GM12878 (cell line): ENCODE measurements at regions of chr6 and their contacts with region 1.

Region 1: DNA sequence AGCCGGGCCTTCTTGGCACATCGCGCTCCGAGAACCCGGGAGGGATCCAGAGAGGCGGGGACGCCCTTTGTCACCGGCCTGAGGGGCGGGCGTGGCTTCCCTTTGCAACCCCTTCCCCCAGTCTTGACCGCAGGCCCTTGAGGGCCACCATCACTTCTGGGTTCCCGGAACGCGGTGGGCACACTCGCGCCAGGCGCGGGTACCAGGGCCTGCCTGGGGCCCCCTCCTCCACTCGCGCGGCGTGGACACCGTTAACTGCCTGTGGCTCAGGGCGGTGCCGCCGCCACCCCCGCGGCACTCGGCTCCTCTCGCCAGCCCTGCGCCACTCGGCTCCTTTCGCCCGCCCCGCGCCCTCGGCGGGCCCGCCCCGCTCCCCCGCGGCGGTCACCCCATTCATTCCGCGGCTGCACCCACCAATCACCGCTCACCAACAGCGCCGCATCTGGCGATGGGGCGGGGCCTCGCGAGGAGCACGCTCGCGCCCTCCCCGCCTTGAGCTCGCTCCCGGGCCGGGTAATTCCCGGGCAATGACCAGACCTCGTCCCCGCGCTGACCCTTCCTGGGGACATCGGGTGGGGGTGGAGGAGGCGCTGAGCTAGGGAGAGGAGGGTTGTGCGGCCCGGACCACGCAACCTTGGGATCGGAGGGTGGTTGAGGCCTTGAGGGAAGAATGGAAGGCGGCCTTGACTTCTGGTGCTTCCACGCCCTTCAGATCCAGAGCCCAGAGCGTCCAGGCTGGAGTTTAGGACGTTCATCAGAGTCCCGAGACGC is 10.5 kb upstream of the ELOVL5 start:
- DNase-seq: peak; percentile 78
- ATAC-seq: peak; percentile 95
- H3K4me3 ChIP-seq: peak overlapping the region; percentile 76
- H3K27ac ChIP-seq: peak overlapping the region; percentile 86
- H3K4me1 ChIP-seq: peaks cover 17% of the 10 kb centered on the region
- H3K27me3 ChIP-seq: no peaks in the 10 kb centered on the region
- CTCF ChIP-seq: no peak
- EP300 ChIP-seq: 0 out of 4 replicates have a peak, but pooled peaks of 1 of the 2 experiments have one; percentile 8
- POLR2A ChIP-seq: peak; percentile 94
- RAD21 ChIP-seq: no peak

Region 2: DNA sequence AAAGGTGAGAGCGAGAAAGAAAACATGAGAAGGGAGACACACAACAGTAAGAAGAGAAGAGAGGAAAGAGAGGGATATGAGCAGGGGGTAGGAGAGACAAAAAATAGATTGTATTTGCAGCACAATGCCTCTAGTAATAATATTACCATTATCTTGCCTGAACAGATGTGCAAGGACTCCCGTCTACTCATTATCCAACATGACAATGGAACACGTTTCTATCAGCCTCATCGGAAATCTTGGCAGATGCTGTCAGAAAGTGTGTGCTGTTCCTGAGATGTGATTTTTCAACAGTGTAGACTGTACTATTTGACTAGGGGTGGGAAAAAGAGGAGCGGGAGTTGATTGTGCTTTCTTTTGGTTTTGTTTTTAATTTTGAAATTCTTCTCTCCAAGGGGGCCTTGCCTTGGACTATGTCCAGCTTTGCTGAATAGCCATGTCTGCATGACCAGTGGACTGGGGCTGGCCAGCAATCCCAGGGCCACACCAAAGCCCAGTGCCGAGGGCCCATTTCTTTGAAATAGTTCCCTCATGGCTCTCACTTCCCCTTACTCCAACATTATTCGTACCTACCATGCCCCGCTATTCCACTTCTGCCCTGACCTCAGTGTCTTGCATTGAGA is 771.1 kb before region 1 on chr6:
- CTCF ChIA-PET with region 1: no interaction called
- POLR2A ChIA-PET with region 1: no interaction called
- RAD21 ChIA-PET with region 1: no interaction called
- SMC1A ChIA-PET with region 1: no interaction called
- in situ Hi-C with region 1: no loop called
- intact Hi-C with region 1: no loop called
- DNase-seq: no peak
- ATAC-seq: no peak
- H3K4me3 ChIP-seq: no peak overlapping the region
- H3K27ac ChIP-seq: no peak overlapping the region
- H3K4me1 ChIP-seq: no peaks in the 10 kb centered on the region
- H3K27me3 ChIP-seq: no peaks in the 10 kb centered on the region
- CTCF ChIP-seq: no peak
- EP300 ChIP-seq: no peak
- POLR2A ChIP-seq: no peak
- RAD21 ChIP-seq: no peak

Region 3: DNA sequence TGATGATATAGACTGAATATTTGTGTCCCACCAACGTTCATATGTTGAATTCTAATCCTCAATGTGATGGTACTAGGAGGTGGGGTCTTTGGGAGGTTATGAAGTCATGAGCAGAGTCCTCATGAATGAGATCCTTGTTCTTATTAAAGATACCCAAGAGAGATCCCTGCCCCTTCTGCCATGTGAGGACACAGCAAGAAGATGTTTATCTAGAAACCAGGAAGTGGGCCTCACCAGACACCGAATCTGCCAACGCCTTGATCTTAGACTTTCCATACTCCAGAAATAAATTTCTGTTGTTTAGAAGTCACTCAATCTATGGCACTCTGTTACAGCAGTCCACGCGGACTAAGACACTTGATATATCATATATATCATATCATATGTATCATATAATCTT is 143.0 kb before region 1 on chr6:
- CTCF ChIA-PET with region 1: no interaction called
- POLR2A ChIA-PET with region 1: no interaction called
- RAD21 ChIA-PET with region 1: no interaction called
- SMC1A ChIA-PET with region 1: no interaction called
- in situ Hi-C with region 1: no loop called
- intact Hi-C with region 1: no loop called
- DNase-seq: no peak
- ATAC-seq: peak; percentile 43
- H3K4me3 ChIP-seq: no peak overlapping the region
- H3K27ac ChIP-seq: no peak overlapping the region
- H3K4me1 ChIP-seq: peaks cover 3% of the 10 kb centered on the region
- H3K27me3 ChIP-seq: no peaks in the 10 kb centered on the region
- CTCF ChIP-seq: no peak
- EP300 ChIP-seq: no peak
- POLR2A ChIP-seq: no peak
- RAD21 ChIP-seq: no peak

Region 4: GRCh38 chr6:53335208-53335994 is 23.9 kb before region 1 on chr6:
- CTCF ChIA-PET with region 1: interaction called, 4 read pairs
- POLR2A ChIA-PET with region 1: interaction called, 15 read pairs
- RAD21 ChIA-PET with region 1: interaction called, 8 read pairs
- SMC1A ChIA-PET with region 1: interaction called, 7 read pairs
- in situ Hi-C with region 1: no loop called
- intact Hi-C with region 1: no loop called
- DNase-seq: peak; percentile 88
- ATAC-seq: peak; percentile 90
- H3K4me3 ChIP-seq: peak overlapping the region; percentile 72
- H3K27ac ChIP-seq: peak overlapping the region; percentile 85
- H3K4me1 ChIP-seq: peaks cover 22% of the 10 kb centered on the region
- H3K27me3 ChIP-seq: no peaks in the 10 kb centered on the region
- CTCF ChIP-seq: no peak
- EP300 ChIP-seq: peak in 1 of 2 experiments; percentile 68; a peak in 2 of 4 replicates
- POLR2A ChIP-seq: peak; percentile 34; the same call in 1 of the 2 replicates
- RAD21 ChIP-seq: no peak

Region 5: GRCh38 chr6:53342217-53342616 is 17.0 kb before region 1 on chr6:
- CTCF ChIA-PET with region 1: interaction called, 6 read pairs
- POLR2A ChIA-PET with region 1: interaction called, 36 read pairs
- RAD21 ChIA-PET with region 1: interaction called, 26 read pairs
- SMC1A ChIA-PET with region 1: interaction called, 15 read pairs
- in situ Hi-C with region 1: no loop called
- intact Hi-C with region 1: no loop called
- DNase-seq: no peak
- ATAC-seq: peak; percentile 28
- H3K4me3 ChIP-seq: peak overlapping the region; percentile 5; the same call in 1 of the 2 replicates
- H3K27ac ChIP-seq: no peak overlapping the region
- H3K4me1 ChIP-seq: peaks cover 23% of the 10 kb centered on the region
- H3K27me3 ChIP-seq: no peaks in the 10 kb centered on the region
- CTCF ChIP-seq: no peak
- EP300 ChIP-seq: no peak
- POLR2A ChIP-seq: no peak
- RAD21 ChIP-seq: no peak

Region 6: GRCh38 chr6:53432318-53433161 is 73.3 kb after region 1 on chr6:
- CTCF ChIA-PET with region 1: interaction called, 5 read pairs
- POLR2A ChIA-PET with region 1: interaction called, 31 read pairs
- RAD21 ChIA-PET with region 1: interaction called, 14 read pairs
- SMC1A ChIA-PET with region 1: interaction called, 8 read pairs
- in situ Hi-C with region 1: no loop called
- intact Hi-C with region 1: loop called (anchors 2 kb)
- DNase-seq: no peak
- ATAC-seq: peak; percentile 44
- H3K4me3 ChIP-seq: no peak overlapping the region
- H3K27ac ChIP-seq: no peak overlapping the region
- H3K4me1 ChIP-seq: no peaks in the 10 kb centered on the region
- H3K27me3 ChIP-seq: no peaks in the 10 kb centered on the region
- CTCF ChIP-seq: no peak
- EP300 ChIP-seq: no peak
- POLR2A ChIP-seq: no peak
- RAD21 ChIP-seq: no peak

Region 7: GRCh38 chr6:53461041-53461656 is 101.9 kb after region 1 on chr6:
- CTCF ChIA-PET with region 1: no interaction called
- POLR2A ChIA-PET with region 1: interaction called, 10 read pairs
- RAD21 ChIA-PET with region 1: interaction called, 3 read pairs
- SMC1A ChIA-PET with region 1: no interaction called
- in situ Hi-C with region 1: no loop called
- intact Hi-C with region 1: loop called (anchors 1 kb)
- DNase-seq: peak; percentile 65
- ATAC-seq: peak; percentile 81
- H3K4me3 ChIP-seq: 0 out of 2 replicates have a peak overlapping the region, but pooled peaks have one; percentile 30
- H3K27ac ChIP-seq: peak overlapping the region; percentile 41; the same call in 1 of the 2 replicates
- H3K4me1 ChIP-seq: no peaks in the 10 kb centered on the region
- H3K27me3 ChIP-seq: no peaks in the 10 kb centered on the region
- CTCF ChIP-seq: no peak
- EP300 ChIP-seq: peak; percentile 40 to 60; a peak in 2 of 4 replicates
- POLR2A ChIP-seq: no peak
- RAD21 ChIP-seq: no peak